Panc1 (cell line): ENCODE measurements at regions of chr1 and their contacts with region 1.

Region 1: DNA sequence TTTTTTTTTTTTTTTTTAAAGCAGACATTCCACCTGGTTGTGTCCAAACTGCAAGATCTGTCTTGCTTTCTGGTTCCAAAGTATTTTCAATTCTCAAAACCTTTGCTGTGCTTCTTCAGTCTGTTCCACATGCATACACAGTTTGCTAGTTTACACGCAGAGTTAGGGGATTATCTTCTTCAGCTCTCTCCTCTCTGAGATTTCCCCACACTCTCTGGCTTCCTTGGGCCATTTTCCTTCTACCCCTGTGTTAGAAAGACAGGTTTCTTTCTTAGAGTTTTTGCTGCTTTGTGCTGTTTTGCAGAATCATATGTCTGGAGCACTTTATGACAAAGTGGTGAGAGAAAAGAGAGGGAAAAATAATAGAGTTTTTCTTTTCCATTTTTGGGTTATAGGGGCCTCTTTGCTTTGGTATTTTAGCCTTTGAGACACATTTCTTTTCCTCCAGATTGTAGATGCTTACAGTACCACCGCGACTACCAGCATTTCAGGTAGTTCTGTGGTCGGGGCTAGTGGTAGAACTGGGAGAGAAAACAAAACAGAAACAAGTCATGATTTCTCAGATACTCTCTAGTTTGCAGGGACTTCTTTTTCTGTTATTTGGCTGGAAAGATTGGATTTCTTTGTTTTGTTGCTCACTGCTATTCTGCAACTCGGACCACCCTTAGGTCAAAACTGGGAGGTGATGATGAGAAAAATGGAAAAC is 66.3 kb downstream of the RABGAP1L start:
- DNase-seq: no peak
- ATAC-seq: no peak
- H3K4me3 ChIP-seq: no peak overlapping the region
- H3K27ac ChIP-seq: no peak overlapping the region
- H3K4me1 ChIP-seq: no peaks in the 10 kb centered on the region
- H3K27me3 ChIP-seq: no peaks in the 10 kb centered on the region
- CTCF ChIP-seq: no peak

Region 2: GRCh38 chr1:174491606-174492005 is 266.0 kb after region 1 on chr1:
- CTCF ChIA-PET with region 1: no interaction called
- POLR2A ChIA-PET with region 1: interaction called, 12 read pairs
- in situ Hi-C with region 1: no loop called
- intact Hi-C with region 1: no loop called
- DNase-seq: no peak
- ATAC-seq: no peak
- H3K4me3 ChIP-seq: no peak overlapping the region
- H3K27ac ChIP-seq: no peak overlapping the region
- H3K4me1 ChIP-seq: no peaks in the 10 kb centered on the region
- H3K27me3 ChIP-seq: no peaks in the 10 kb centered on the region
- CTCF ChIP-seq: no peak